ENCODE measurements at regions of chr12 and their contacts with region 1.

Region 1: DNA sequence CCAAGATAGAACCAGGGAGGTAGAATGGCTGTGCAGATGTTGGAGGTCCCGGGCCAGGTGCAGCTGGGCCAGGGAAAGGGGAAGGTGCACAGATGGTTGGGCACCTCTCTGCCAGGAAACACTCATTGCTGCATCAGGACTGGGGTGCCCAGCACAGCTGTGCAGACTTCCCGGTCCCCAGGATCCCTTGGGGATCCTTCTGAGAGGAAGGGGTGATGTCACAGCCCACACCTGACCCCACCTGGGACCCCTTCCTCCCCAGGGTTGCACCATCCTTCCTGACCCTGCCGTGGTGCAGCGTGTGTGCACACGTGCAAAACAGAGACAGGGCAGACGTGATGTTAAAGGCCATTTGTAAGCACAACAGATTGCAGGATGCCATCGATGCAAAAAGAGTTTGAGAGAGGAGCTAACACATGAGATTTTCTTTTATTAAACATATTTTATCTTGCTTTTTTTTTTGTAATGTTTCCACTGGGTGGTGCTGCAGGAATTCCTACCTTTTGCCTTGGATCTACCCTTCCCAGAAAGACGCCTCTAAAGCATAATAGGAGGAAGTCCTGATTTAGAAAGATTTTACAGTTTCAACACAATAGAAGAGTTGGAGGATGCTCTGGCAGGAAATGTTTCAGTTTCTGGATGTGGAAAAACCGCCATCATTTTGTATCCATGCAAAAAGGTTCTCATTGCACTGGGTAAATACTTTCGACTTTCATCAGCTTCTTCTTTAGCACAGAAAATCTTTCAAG is 14.8 kb downstream of the ELK3 start:
- DNase-seq: no peak
- ATAC-seq: no peak
- H3K4me3 Mint-ChIP-seq: peak overlapping the region; percentile 3
- H3K27ac Mint-ChIP-seq: peak overlapping the region; percentile 98
- H3K4me1 Mint-ChIP-seq: peaks cover 99% of the 10 kb centered on the region
- H3K27me3 Mint-ChIP-seq: no peaks in the 10 kb centered on the region

Region 2: GRCh38 chr12:95774311-95775045 is 434.5 kb before region 1 on chr12:
- CTCF ChIA-PET with region 1: no interaction called
- POLR2A ChIA-PET with region 1: no interaction called
- intact Hi-C with region 1: no loop called
- DNase-seq: no peak
- ATAC-seq: no peak
- H3K4me3 Mint-ChIP-seq: no peak overlapping the region
- H3K27ac Mint-ChIP-seq: no peak overlapping the region
- H3K4me1 Mint-ChIP-seq: no peaks in the 10 kb centered on the region
- H3K27me3 Mint-ChIP-seq: peaks cover 24% of the 10 kb centered on the region

Region 3: DNA sequence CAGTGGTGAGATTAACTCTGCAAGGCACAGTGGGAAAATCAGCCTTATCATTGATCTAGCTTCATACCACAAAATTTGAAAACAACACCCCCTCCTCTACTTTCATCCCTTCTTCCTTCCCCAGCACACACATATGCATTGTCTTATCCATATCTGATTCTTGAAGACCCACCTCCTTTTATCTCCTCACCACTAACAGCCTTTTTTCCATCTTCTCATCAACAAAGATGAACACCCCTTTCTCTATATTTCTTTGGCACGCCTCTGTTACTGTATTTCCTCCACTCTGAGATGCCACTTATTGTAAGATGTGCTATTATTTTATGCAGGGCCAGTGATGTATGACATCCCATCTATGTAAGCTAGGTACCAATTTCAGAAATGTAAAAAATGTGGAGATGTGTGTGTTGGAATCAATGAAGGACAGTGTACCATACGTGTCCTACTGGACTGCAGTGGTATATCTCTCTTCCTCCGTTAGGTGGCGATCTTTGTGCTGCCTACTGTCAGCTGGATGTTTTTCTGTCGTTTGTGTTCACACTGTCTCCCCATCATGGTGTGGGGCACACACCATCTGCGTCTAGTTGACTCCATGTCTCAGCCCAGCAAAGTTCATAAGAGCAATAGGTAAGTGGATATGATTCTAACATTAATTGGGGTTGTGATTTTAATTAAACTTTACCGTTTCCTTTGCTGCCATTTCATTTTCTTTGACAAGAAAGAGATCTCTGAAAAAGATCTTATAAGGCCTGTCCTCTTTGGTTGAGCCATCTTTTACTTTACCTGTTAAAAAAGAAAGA is 290.6 kb before region 1 on chr12:
- CTCF ChIA-PET with region 1: interaction called, 4 read pairs
- POLR2A ChIA-PET with region 1: no interaction called
- intact Hi-C with region 1: loop called (anchors 5 to 10 kb)
- DNase-seq: peak; percentile 60
- ATAC-seq: peak; percentile 97
- H3K4me3 Mint-ChIP-seq: no peak overlapping the region
- H3K27ac Mint-ChIP-seq: no peak overlapping the region
- H3K4me1 Mint-ChIP-seq: no peaks in the 10 kb centered on the region
- H3K27me3 Mint-ChIP-seq: no peaks in the 10 kb centered on the region

Region 4: GRCh38 chr12:96047229-96048211 is 161.5 kb before region 1 on chr12:
- CTCF ChIA-PET with region 1: interaction called, 3 read pairs
- POLR2A ChIA-PET with region 1: no interaction called
- intact Hi-C with region 1: loop called in 1 of 2 experiments (anchors 5 kb)
- DNase-seq: peak; percentile 30
- ATAC-seq: peak; percentile 83
- H3K4me3 Mint-ChIP-seq: peak overlapping the region; percentile 20
- H3K27ac Mint-ChIP-seq: peak overlapping the region; percentile 92
- H3K4me1 Mint-ChIP-seq: peaks cover 58% of the 10 kb centered on the region
- H3K27me3 Mint-ChIP-seq: no peaks in the 10 kb centered on the region

Region 5: GRCh38 chr12:96061864-96062453 is 147.0 kb before region 1 on chr12:
- CTCF ChIA-PET with region 1: interaction called, 52 read pairs
- POLR2A ChIA-PET with region 1: interaction called, 11 read pairs
- intact Hi-C with region 1: no loop called
- DNase-seq: peak; percentile 87
- ATAC-seq: peak; percentile 91
- H3K4me3 Mint-ChIP-seq: no peak overlapping the region
- H3K27ac Mint-ChIP-seq: peak overlapping the region; percentile 47
- H3K4me1 Mint-ChIP-seq: peaks cover 23% of the 10 kb centered on the region
- H3K27me3 Mint-ChIP-seq: no peaks in the 10 kb centered on the region

Region 6: GRCh38 chr12:96068111-96068510 is 140.9 kb before region 1 on chr12:
- CTCF ChIA-PET with region 1: interaction called, 46 read pairs
- POLR2A ChIA-PET with region 1: interaction called, 11 read pairs
- intact Hi-C with region 1: no loop called
- DNase-seq: no peak
- ATAC-seq: no peak
- H3K4me3 Mint-ChIP-seq: no peak overlapping the region
- H3K27ac Mint-ChIP-seq: no peak overlapping the region
- H3K4me1 Mint-ChIP-seq: peaks cover 25% of the 10 kb centered on the region
- H3K27me3 Mint-ChIP-seq: no peaks in the 10 kb centered on the region

Region 7: DNA sequence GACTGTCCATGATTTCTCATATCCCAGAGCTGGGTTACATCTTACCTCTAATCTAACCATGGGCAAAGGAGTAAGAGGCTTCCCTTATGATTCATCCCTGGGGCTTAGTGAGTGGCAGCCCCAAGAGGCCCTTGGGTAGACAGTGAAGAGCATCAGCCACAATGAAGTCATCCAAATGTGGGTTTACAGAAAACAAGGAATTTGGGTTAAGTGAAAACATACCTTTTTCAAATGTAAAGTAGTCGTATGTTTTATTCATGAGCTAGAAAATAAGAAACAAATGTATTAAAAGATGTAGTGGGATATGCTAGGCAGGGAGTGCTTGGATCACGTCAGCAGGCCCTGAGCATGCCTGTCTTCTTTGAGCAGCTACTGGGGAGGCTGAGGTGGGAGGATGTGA is 68.8 kb before region 1 on chr12:
- CTCF ChIA-PET with region 1: no interaction called
- POLR2A ChIA-PET with region 1: no interaction called
- intact Hi-C with region 1: loop called (anchors 2 to 5 kb)
- DNase-seq: peak; percentile 29
- ATAC-seq: peak; percentile 86
- H3K4me3 Mint-ChIP-seq: no peak overlapping the region
- H3K27ac Mint-ChIP-seq: no peak overlapping the region
- H3K4me1 Mint-ChIP-seq: peaks cover 39% of the 10 kb centered on the region
- H3K27me3 Mint-ChIP-seq: no peaks in the 10 kb centered on the region

Region 8: DNA sequence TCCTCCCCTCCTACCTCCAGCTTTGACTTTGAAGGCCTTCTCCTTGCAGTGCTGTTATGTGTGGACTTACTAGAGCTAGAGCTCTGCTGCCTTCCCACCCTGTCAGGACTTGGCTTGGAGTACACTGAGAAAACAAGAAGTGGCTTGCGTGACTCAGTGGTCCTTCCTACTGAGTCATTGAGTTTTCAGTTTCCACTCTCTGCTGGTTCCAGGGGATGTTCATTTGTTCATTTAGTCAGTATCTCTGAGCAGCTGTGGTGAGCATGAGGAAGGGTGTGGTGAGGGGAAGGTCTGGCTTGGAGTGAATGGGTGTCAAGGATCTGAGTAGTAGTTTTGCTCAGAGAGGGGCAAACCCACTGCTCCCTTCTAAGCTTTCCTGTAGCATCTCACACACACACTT is 32.0 kb before region 1 on chr12:
- CTCF ChIA-PET with region 1: interaction called, 14 read pairs
- POLR2A ChIA-PET with region 1: interaction called, 4 read pairs
- intact Hi-C with region 1: loop called (anchors 1 to 2 kb)
- DNase-seq: peak; percentile 88
- ATAC-seq: peak; percentile 98
- H3K4me3 Mint-ChIP-seq: peak overlapping the region; percentile 18
- H3K27ac Mint-ChIP-seq: peak overlapping the region; percentile 83
- H3K4me1 Mint-ChIP-seq: peaks cover 25% of the 10 kb centered on the region
- H3K27me3 Mint-ChIP-seq: no peaks in the 10 kb centered on the region

Region 9: DNA sequence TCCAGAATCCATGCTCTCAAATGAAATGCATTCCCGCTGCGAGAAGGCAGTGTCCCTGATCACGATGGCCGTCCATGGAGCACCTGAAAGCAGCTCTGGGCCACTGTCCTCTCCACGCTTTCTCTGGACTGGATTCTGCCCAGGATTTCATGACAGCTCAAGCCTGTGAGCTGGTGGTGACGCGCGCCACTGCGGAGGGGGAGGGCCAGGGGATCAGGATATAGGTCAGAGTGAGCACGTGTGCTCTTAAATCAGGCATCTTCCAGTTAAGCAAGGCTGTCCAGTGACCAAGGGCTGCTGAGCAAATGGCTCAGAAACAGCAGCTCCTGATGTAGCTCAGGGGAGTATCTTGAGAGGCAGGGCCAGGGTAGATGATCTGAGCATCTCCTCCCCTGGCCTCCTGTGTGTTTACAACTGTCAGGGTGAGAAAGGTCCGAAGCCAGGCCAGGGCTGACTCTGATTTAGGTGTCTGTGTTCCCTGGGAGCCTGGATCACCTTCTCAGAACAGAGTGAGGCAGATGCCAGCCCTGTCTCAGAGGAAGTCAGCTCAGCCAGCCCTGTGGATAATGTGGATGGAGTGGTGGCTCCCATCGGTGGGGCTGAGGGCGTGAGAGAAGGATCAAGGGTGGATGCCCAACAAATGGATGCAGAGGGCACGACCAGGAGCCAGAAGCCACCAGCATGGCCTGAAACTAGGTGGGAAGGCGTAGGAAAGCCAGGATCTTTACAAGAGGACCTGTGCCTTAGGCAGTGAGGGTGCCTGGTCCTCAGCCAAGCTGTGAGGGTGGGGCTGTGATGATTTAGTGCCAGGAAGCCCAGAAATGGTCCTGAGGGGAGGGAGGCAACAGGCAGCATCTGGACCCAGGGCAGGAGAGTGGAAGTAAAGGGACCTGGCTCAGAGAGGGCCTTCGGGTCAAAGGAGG is 40.5 kb after region 1 on chr12:
- CTCF ChIA-PET with region 1: no interaction called
- POLR2A ChIA-PET with region 1: no interaction called
- intact Hi-C with region 1: no loop called
- DNase-seq: no peak
- ATAC-seq: no peak
- H3K4me3 Mint-ChIP-seq: no peak overlapping the region
- H3K27ac Mint-ChIP-seq: peak overlapping the region; percentile 48
- H3K4me1 Mint-ChIP-seq: peaks cover 46% of the 10 kb centered on the region
- H3K27me3 Mint-ChIP-seq: no peaks in the 10 kb centered on the region

Measured in activated CD4-positive, alpha-beta T cell treated with anti-CD3 and anti-CD28 coated beads for 36 hours (primary cell).